Activated CD4-positive, alpha-beta T cell treated with anti-CD3 and anti-CD28 coated beads for 36 hours (primary cell): ENCODE measurements at regions of chr17 and their contacts with region 1.

Region 1: GRCh38 chr17:77609553-77610517 is 348.7 kb upstream of the TNRC6C start:
- DNase-seq: peak; percentile 81
- ATAC-seq: peak; percentile 99
- H3K4me3 Mint-ChIP-seq: peak overlapping the region; percentile 55
- H3K27ac Mint-ChIP-seq: peak overlapping the region; percentile 88
- H3K4me1 Mint-ChIP-seq: peaks cover 28% of the 10 kb centered on the region
- H3K27me3 Mint-ChIP-seq: no peaks in the 10 kb centered on the region

Region 2: DNA sequence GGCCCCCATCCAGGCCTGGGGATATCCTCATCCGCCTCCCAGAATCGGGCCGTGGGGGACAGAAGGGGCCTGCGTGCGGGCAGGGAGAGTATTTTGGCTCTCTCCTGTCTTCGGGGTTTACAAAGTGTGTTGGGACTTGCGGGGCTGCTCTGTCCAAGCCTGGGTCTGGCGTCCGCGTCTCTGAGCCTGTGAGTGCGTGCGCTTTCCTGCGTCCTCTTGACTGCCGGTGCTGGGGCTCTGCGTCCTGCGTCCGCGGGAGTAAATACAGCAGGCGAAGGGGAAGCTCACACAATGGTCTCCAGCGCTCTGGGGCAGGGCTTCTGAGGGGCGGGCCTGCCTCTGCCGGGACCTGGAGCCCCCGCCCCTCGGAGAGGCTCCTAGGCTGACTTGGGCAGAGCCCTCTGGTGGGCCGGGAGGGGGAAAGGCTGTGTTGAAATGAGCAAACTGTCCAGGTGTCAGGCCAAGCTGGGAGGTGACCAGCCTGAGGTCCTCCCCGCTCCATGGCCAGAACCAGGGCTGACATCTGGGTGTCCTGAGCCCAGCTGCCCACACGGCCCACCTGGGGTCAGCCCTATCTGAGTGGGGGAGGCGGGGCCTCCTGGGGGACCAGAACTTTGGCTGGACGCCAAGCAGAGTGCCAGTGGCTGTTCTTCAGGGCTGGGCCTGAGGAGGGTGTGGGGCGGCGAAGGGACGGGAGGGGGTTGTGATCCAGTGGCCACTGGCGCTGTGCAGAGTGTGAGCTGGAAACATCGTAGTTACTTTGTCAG is 235.5 kb before region 1 on chr17:
- CTCF ChIA-PET with region 1: no interaction called
- POLR2A ChIA-PET with region 1: no interaction called
- intact Hi-C with region 1: no loop called
- DNase-seq: peak; percentile 88
- ATAC-seq: peak; percentile 76
- H3K4me3 Mint-ChIP-seq: peak overlapping the region; percentile 81
- H3K27ac Mint-ChIP-seq: peak overlapping the region; percentile 88
- H3K4me1 Mint-ChIP-seq: peaks cover 66% of the 10 kb centered on the region
- H3K27me3 Mint-ChIP-seq: no peaks in the 10 kb centered on the region

Region 3: GRCh38 chr17:77666881-77667395 is 57.1 kb after region 1 on chr17:
- CTCF ChIA-PET with region 1: no interaction called
- POLR2A ChIA-PET with region 1: no interaction called
- intact Hi-C with region 1: loop called in 1 of 2 experiments (anchors 2 kb)
- DNase-seq: peak; percentile 84
- ATAC-seq: peak; percentile 86
- H3K4me3 Mint-ChIP-seq: peak overlapping the region; percentile 75
- H3K27ac Mint-ChIP-seq: peak overlapping the region; percentile 100
- H3K4me1 Mint-ChIP-seq: peaks cover 32% of the 10 kb centered on the region
- H3K27me3 Mint-ChIP-seq: no peaks in the 10 kb centered on the region

Region 4: GRCh38 chr17:79589669-79590522 is 1980.1 kb after region 1 on chr17:
- CTCF ChIA-PET with region 1: no interaction called
- POLR2A ChIA-PET with region 1: no interaction called
- intact Hi-C with region 1: no loop called
- DNase-seq: no peak
- ATAC-seq: no peak
- H3K4me3 Mint-ChIP-seq: no peak overlapping the region
- H3K27ac Mint-ChIP-seq: no peak overlapping the region
- H3K4me1 Mint-ChIP-seq: no peaks in the 10 kb centered on the region
- H3K27me3 Mint-ChIP-seq: peaks cover 6% of the 10 kb centered on the region